Stomach (tissue), 19 donors: ENCODE measurements at regions of chr3 and their contacts with region 1.

Region 1: GRCh38 chr3:5122030-5122740 is at the start of gene ARL8B:
- DNase-seq: peak; percentile 92 to 97
- H3K4me3 ChIP-seq: peak within 1 kb of the TSS; percentile 99 to 100 (median 100)
- H3K27ac ChIP-seq: peak within 1 kb of the TSS; percentile 88 to 97 (median 94)
- H3K4me1 ChIP-seq: peaks cover 16 to 48% (median 38%) of the 10 kb centered on the region in 4 donors
- H3K27me3 ChIP-seq: no peaks in the 10 kb centered on the region
- CTCF ChIP-seq: peak in 5 of 7 experiments; percentile 78 to 97 (median 94)
- EP300 ChIP-seq: no peak
- POLR2A ChIP-seq: no peak
- total RNA-seq, gene ARL8B: 14.8 to 73.6 (median 43.2) TPM

Region 2: GRCh38 chr3:4908433-4909157 is 213.6 kb before region 1 on chr3:
- intact Hi-C with region 1: no loop called
- DNase-seq: no peak
- H3K4me3 ChIP-seq: no peak overlapping the region
- H3K27ac ChIP-seq: no peak overlapping the region
- H3K4me1 ChIP-seq: peaks cover 0 to 21% (median 7%) of the 10 kb centered on the region in 4 donors
- H3K27me3 ChIP-seq: no peaks in the 10 kb centered on the region
- CTCF ChIP-seq: no peak
- EP300 ChIP-seq: no peak
- POLR2A ChIP-seq: no peak

Region 3: GRCh38 chr3:5051772-5052171 is 70.4 kb before region 1 on chr3:
- intact Hi-C with region 1: no loop called
- DNase-seq: no peak
- H3K4me3 ChIP-seq: no peak overlapping the region
- H3K27ac ChIP-seq: no peak overlapping the region
- H3K4me1 ChIP-seq: peaks cover 0 to 7% (median 0%) of the 10 kb centered on the region in 4 donors
- H3K27me3 ChIP-seq: no peaks in the 10 kb centered on the region
- CTCF ChIP-seq: no peak
- EP300 ChIP-seq: no peak
- POLR2A ChIP-seq: no peak

Region 4: DNA sequence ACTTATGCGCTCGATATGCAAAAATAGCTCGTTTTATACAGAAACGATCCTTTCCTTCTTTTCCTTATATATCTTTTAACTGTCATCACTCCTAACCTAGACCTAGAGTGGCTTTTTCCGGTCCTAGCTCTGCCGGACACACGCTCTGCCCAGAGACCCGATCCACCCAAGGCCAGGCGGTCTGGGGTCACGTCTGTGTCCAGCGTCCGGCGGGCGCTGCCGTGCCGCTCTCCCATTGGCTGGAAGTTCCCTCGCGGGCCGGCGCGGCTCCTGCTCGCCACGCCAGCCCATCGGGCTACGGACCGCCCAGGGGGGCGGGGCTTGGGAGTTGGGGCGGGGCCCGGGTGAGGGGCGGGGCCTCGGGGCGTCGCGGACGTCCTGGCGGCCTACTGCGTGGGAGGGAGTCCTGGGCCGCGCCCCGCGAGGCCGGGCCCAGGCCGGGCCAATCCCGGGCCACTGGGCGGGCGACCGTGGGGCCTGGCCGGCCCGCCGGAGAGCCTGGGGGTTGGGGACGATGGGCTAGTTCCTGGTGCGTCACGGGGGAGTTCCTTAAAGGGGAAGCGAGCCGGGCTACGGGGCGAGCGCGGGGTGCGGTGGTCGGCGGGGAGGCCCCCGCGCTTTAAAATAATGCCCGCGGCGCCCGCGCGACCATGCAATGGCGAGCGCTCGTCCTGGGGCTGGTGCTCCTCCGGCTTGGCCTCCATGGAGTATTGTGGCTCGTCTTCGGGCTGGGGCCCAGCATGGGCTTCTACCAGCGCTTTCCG is 65.2 kb after region 1 on chr3 and contains the start of gene EDEM1:
- intact Hi-C with region 1: loop called (anchors 10 kb)
- DNase-seq: peak; percentile 96 to 98
- H3K4me3 ChIP-seq: peak within 1 kb of the TSS; percentile 68 to 96 (median 87)
- H3K27ac ChIP-seq: peak within 1 kb of the TSS; percentile 93 to 100 (median 99)
- H3K4me1 ChIP-seq: peaks cover 30 to 73% (median 58%) of the 10 kb centered on the region in 4 donors
- H3K27me3 ChIP-seq: no peaks in the 10 kb centered on the region
- CTCF ChIP-seq: no peak
- EP300 ChIP-seq: no peak
- POLR2A ChIP-seq: peak in 2 of 4 donors; percentile 17 to 63
- total RNA-seq, gene EDEM1: 22.2 to 160 (median 53.1) TPM